Activated naive CD4-positive, alpha-beta T cell treated with anti-CD3 and anti-CD28 coated beads for 36 hours (primary cell): ENCODE measurements at regions of chr5 and their contacts with region 1.

Region 1: GRCh38 chr5:76582230-76583162 is 40.7 kb downstream of the F2RL2 start:
- DNase-seq: peak; percentile 65
- H3K4me3 Mint-ChIP-seq: no peak overlapping the region
- H3K27ac Mint-ChIP-seq: peak overlapping the region; percentile 36
- H3K4me1 Mint-ChIP-seq: peaks cover 27% of the 10 kb centered on the region
- H3K27me3 Mint-ChIP-seq: no peaks in the 10 kb centered on the region

Region 2: GRCh38 chr5:76074487-76075065 is 507.9 kb before region 1 on chr5:
- CTCF ChIA-PET with region 1: no interaction called
- intact Hi-C with region 1: loop called (anchors 10 kb)
- DNase-seq: peak; percentile 48
- H3K4me3 Mint-ChIP-seq: no peak overlapping the region
- H3K27ac Mint-ChIP-seq: no peak overlapping the region
- H3K4me1 Mint-ChIP-seq: no peaks in the 10 kb centered on the region
- H3K27me3 Mint-ChIP-seq: peaks cover 36% of the 10 kb centered on the region

Region 3: GRCh38 chr5:76114179-76114851 is 468.2 kb before region 1 on chr5:
- CTCF ChIA-PET with region 1: no interaction called
- intact Hi-C with region 1: no loop called
- DNase-seq: no peak
- H3K4me3 Mint-ChIP-seq: no peak overlapping the region
- H3K27ac Mint-ChIP-seq: no peak overlapping the region
- H3K4me1 Mint-ChIP-seq: no peaks in the 10 kb centered on the region
- H3K27me3 Mint-ChIP-seq: peaks cover 25% of the 10 kb centered on the region

Region 4: DNA sequence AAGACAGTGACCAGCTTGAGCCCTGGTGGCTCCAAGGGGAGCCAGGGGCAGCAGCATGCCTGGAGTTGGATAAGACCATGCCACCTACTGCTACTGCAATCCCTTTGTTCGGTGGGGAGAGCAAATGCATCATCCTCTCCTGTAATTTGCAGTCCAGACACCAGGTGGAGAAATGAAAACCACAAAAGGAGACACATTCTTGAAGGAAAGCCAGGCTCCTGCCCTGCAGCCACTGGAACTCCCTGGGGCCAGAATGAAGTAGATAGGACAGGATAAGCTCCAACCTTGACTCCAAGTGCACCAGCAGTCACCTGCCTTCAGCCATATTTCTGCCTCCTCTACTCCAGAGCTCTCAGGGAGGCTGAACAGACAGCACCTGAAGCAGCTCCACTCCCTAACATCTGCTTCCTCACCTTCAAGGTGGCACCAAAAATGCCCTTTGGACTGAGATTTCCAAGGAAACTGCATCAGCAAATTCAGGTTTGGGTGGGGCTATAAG is 244.5 kb before region 1 on chr5:
- CTCF ChIA-PET with region 1: interaction called, 4 read pairs
- intact Hi-C with region 1: loop called (anchors 1 kb)
- DNase-seq: peak; percentile 62
- H3K4me3 Mint-ChIP-seq: no peak overlapping the region
- H3K27ac Mint-ChIP-seq: no peak overlapping the region
- H3K4me1 Mint-ChIP-seq: peaks cover 18% of the 10 kb centered on the region
- H3K27me3 Mint-ChIP-seq: no peaks in the 10 kb centered on the region

Region 5: GRCh38 chr5:76367623-76368371 is 214.7 kb before region 1 on chr5:
- CTCF ChIA-PET with region 1: interaction called, 3 read pairs
- intact Hi-C with region 1: loop called (anchors 1 kb)
- DNase-seq: peak; percentile 65
- H3K4me3 Mint-ChIP-seq: no peak overlapping the region
- H3K27ac Mint-ChIP-seq: peak overlapping the region; percentile 88
- H3K4me1 Mint-ChIP-seq: peaks cover 27% of the 10 kb centered on the region
- H3K27me3 Mint-ChIP-seq: no peaks in the 10 kb centered on the region

Region 6: DNA sequence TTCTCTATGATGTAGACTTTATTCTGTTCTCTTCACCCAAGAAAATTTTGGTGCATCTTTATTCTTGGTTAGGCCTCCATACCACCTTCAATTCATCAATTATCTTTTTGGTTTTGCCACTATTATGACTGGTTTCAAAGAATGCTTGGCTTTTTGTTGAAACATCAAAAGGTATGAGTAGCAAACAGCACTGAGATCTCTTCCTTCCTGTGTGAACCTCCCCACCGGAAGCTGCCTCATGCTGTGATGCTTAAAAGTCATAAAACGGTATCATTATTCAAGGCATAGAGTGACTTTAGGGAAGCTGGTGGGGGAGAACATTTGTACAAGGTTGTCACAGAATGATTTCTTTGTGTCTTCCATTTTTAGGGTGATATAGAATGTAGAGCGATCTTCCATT is 108.8 kb before region 1 on chr5:
- CTCF ChIA-PET with region 1: interaction called, 3 read pairs
- intact Hi-C with region 1: loop called (anchors 1 kb)
- DNase-seq: peak; percentile 90
- H3K4me3 Mint-ChIP-seq: peak overlapping the region; percentile 38
- H3K27ac Mint-ChIP-seq: peak overlapping the region; percentile 92
- H3K4me1 Mint-ChIP-seq: peaks cover 76% of the 10 kb centered on the region
- H3K27me3 Mint-ChIP-seq: no peaks in the 10 kb centered on the region

Region 7: GRCh38 chr5:76521240-76521758 is 61.2 kb before region 1 on chr5:
- CTCF ChIA-PET with region 1: interaction called, 5 read pairs
- intact Hi-C with region 1: loop called (anchors 1 kb)
- DNase-seq: no peak
- H3K4me3 Mint-ChIP-seq: no peak overlapping the region
- H3K27ac Mint-ChIP-seq: peak overlapping the region; percentile 83
- H3K4me1 Mint-ChIP-seq: peaks cover 71% of the 10 kb centered on the region
- H3K27me3 Mint-ChIP-seq: no peaks in the 10 kb centered on the region

Region 8: DNA sequence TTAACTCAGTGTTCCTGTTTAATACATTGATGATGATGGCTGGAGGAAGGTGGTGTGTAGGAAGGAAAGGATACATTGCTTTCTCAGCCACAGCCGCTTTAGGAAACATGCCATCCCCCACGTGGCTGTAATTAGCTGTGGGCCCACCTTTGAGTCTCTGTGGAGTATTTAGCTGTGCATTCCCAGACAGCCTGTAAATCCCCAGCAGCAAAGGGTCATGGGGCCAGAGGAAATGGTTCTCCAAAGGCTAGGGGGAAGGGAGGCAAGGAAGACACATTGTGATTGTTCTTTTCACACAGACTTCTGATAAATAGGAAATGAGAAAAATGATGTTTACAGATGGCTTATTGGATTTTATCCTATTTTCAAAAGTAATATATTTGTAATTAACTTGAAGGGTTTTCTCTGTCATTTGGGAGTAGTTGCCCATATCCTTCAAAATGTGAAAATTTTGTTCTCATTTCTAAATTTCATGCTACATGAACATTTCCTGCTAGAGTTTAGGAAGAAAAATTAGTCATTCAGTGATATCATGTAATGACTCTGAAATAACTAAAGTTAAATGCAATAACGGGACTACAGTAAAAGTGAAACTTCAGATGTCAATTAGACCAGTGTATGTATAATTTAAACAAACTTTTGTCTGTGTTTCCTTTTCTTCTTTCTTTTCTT is 109.1 kb after region 1 on chr5:
- CTCF ChIA-PET with region 1: no interaction called
- intact Hi-C with region 1: loop called (anchors 1 kb)
- DNase-seq: no peak
- H3K4me3 Mint-ChIP-seq: no peak overlapping the region
- H3K27ac Mint-ChIP-seq: peak overlapping the region; percentile 36
- H3K4me1 Mint-ChIP-seq: peaks cover 15% of the 10 kb centered on the region
- H3K27me3 Mint-ChIP-seq: no peaks in the 10 kb centered on the region

Region 9: GRCh38 chr5:76742583-76742982 is 160.1 kb after region 1 on chr5:
- CTCF ChIA-PET with region 1: no interaction called
- intact Hi-C with region 1: no loop called
- DNase-seq: no peak
- H3K4me3 Mint-ChIP-seq: no peak overlapping the region
- H3K27ac Mint-ChIP-seq: no peak overlapping the region
- H3K4me1 Mint-ChIP-seq: peaks cover 15% of the 10 kb centered on the region
- H3K27me3 Mint-ChIP-seq: no peaks in the 10 kb centered on the region